Activated CD8-positive, alpha-beta T cell treated with anti-CD3 and anti-CD28 coated beads for 36 hours (primary cell): ENCODE measurements at regions of chr2 and their contacts with region 1.

Region 1: DNA sequence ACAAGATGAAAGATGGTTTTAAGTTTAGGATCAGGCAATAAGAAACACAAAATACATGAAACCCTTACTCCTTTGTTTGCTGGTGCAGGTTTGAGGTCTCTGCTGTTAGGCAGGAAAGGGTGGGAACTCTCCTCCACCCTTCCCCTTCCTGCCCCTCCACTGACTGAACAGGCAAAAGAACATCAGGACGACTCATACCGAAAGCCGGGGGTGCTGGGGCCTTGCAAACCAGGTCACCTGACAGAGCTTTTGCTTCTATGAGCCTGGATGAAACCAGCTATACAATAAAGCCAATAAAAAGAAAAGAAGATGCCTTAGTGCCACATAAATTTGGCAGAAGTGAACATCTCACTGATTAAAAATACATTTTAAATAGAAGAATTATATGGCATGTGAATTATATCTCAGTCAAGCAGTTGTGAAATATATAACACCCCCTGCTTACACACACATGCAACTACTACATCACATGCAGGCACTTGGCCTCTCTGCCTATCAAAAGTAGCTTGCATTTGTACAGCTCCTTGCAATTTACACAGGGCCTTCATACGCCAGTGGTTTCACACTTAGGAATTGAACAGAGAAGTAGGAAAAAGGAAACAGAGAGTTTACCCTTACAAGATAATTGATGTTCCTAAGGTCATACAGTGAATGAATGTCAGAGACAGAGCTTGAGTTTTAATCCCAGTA is 215.1 kb upstream of the TRIB2 start:
- DNase-seq: peak; percentile 92
- ATAC-seq: peak; percentile 75
- H3K4me3 Mint-ChIP-seq: no peak overlapping the region
- H3K27ac Mint-ChIP-seq: peak overlapping the region; percentile 75
- H3K4me1 Mint-ChIP-seq: peaks cover 91% of the 10 kb centered on the region
- H3K27me3 Mint-ChIP-seq: no peaks in the 10 kb centered on the region
- CTCF ChIP-seq: no peak

Region 2: GRCh38 chr2:12017499-12018157 is 484.0 kb before region 1 on chr2:
- CTCF ChIA-PET with region 1: no interaction called
- POLR2A ChIA-PET with region 1: no interaction called
- intact Hi-C with region 1: no loop called
- DNase-seq: no peak
- ATAC-seq: no peak
- H3K4me3 Mint-ChIP-seq: no peak overlapping the region
- H3K27ac Mint-ChIP-seq: no peak overlapping the region
- H3K4me1 Mint-ChIP-seq: peaks cover 14% of the 10 kb centered on the region
- H3K27me3 Mint-ChIP-seq: peaks cover 30% of the 10 kb centered on the region
- CTCF ChIP-seq: no peak

Region 3: GRCh38 chr2:12293874-12294273 is 207.7 kb before region 1 on chr2:
- CTCF ChIA-PET with region 1: no interaction called
- POLR2A ChIA-PET with region 1: no interaction called
- intact Hi-C with region 1: loop called (anchors 5 kb)
- DNase-seq: peak; percentile 15
- ATAC-seq: peak; percentile 93
- H3K4me3 Mint-ChIP-seq: no peak overlapping the region
- H3K27ac Mint-ChIP-seq: peak overlapping the region; percentile 53
- H3K4me1 Mint-ChIP-seq: peaks cover 41% of the 10 kb centered on the region
- H3K27me3 Mint-ChIP-seq: peaks cover 2% of the 10 kb centered on the region
- CTCF ChIP-seq: no peak

Region 4: DNA sequence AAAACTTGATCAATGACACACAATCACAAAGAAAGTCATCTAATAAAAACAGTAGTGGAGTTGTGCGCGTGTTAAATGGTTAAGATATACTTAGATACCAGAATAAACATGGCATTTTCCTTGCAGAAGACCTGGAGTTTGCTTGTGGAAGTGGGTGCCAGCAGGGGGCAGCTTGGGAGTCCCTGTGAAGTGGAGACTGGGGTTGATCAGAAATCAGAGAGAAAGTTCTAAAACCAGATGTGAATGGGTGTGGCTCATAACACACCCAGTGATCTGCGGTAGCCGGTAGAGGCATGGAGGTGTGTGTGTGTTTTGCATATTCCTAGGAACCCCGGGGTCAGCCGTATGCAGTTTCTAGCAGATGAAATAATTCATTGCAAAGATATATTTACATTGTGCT is 85.0 kb before region 1 on chr2:
- CTCF ChIA-PET with region 1: no interaction called
- POLR2A ChIA-PET with region 1: no interaction called
- intact Hi-C with region 1: loop called (anchors 5 kb)
- DNase-seq: peak; percentile 67
- ATAC-seq: no peak
- H3K4me3 Mint-ChIP-seq: no peak overlapping the region
- H3K27ac Mint-ChIP-seq: no peak overlapping the region
- H3K4me1 Mint-ChIP-seq: peaks cover 30% of the 10 kb centered on the region
- H3K27me3 Mint-ChIP-seq: no peaks in the 10 kb centered on the region
- CTCF ChIP-seq: peak; percentile 41

Region 5: GRCh38 chr2:12555012-12555645 is 53.5 kb after region 1 on chr2:
- CTCF ChIA-PET with region 1: interaction called, 3 read pairs
- POLR2A ChIA-PET with region 1: interaction called, 6 read pairs
- intact Hi-C with region 1: loop called (anchors 5 kb)
- DNase-seq: peak; percentile 59
- ATAC-seq: peak; percentile 89
- H3K4me3 Mint-ChIP-seq: peak overlapping the region; percentile 4
- H3K27ac Mint-ChIP-seq: peak overlapping the region; percentile 77
- H3K4me1 Mint-ChIP-seq: peaks cover 34% of the 10 kb centered on the region
- H3K27me3 Mint-ChIP-seq: no peaks in the 10 kb centered on the region
- CTCF ChIP-seq: no peak

Region 6: DNA sequence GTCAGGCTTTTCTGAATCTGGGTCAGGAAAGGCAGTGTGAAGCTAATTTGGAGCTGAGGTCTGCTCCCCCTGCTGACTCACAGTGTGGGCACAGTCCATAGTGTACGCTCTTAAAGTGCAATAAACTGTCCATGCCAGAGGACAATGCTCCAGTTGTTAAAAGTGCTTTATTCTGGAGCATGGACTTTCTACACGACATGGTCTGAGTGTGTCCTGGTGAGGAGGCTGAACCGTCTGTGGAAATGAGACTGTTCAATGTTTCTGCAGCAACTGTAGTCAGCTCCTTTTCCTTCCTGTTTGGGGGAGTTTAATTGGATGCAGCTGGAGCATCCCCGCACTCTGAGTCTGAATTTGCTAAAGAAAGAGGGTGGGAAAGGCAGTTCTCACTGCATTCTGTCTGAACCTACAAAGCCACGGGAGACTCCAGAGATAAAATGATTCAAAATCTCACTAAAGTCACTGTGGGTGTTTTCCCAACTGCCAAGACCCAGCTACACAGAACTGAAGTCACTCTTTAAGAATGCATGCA is 104.9 kb after region 1 on chr2:
- CTCF ChIA-PET with region 1: no interaction called
- POLR2A ChIA-PET with region 1: no interaction called
- intact Hi-C with region 1: no loop called
- DNase-seq: no peak
- ATAC-seq: peak; percentile 45
- H3K4me3 Mint-ChIP-seq: no peak overlapping the region
- H3K27ac Mint-ChIP-seq: no peak overlapping the region
- H3K4me1 Mint-ChIP-seq: peaks cover 14% of the 10 kb centered on the region
- H3K27me3 Mint-ChIP-seq: no peaks in the 10 kb centered on the region
- CTCF ChIP-seq: no peak

Region 7: DNA sequence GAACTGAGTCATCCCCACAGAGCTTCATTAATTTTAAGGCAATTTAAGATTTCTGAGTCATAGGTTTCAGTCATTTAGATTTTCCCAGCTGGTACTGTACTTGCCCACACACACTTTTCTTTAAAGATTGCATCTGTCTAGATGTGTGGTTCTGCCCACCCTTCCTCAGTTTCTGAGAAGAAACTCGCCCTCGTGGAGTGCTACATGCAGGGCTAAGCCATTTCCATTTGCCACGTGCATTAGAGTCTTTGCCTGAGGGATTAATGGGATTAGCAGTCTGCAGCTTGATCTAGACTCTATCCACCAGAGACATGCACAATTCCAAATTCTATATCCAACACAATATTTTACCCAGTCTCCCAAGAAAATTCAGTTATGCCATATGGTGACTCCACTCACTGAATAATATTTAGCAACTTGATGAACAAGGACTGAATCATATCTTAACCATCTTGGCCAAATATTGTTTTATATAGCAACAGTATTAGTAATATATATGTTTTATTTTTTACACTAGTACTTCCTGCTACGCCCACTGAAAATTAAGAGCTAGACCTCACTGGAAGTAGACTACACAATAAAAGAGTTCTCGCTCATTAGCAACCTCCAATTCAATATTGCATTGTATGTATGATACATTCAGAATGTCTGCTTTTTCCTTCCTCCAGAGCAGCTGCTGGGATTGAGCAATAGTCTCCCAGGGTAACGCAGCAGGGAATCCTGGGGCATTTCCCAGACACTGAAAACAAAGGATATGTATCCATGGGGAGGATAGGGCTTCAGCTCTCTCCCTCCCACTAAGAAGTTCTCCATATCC is 200.9 kb after region 1 on chr2:
- CTCF ChIA-PET with region 1: no interaction called
- POLR2A ChIA-PET with region 1: no interaction called
- intact Hi-C with region 1: loop called (anchors 2 kb)
- DNase-seq: peak; percentile 39
- ATAC-seq: peak; percentile 86
- H3K4me3 Mint-ChIP-seq: no peak overlapping the region
- H3K27ac Mint-ChIP-seq: no peak overlapping the region
- H3K4me1 Mint-ChIP-seq: peaks cover 36% of the 10 kb centered on the region
- H3K27me3 Mint-ChIP-seq: no peaks in the 10 kb centered on the region
- CTCF ChIP-seq: no peak